Caco-2 (cell line): ENCODE measurements at regions of chr13 and their contacts with region 1.

Region 1: DNA sequence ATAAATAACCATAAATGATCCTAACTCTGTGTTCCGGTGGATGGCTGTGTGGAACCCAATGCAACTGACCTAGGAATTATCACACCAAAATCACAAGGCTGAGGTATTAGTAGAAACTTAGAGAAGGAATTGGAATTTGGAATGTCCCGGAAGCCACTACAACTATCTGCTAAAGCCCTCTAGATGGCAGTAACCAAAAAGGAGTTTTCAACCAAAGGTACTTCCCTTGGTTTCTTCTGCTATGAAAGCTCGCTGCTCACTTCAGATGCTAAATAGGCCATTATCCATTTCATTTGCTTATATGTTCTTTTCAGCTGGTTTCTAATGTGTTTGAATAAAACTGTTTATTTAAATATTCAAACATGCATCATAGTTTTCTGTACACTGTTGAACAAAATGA is 1589.1 kb upstream of the SPRY2 start:
- DNase-seq: peak in 1 of 2 experiments; percentile 26
- H3K4me3 ChIP-seq: no peak overlapping the region
- H3K4me3 Mint-ChIP-seq: no peak overlapping the region
- H3K27ac Mint-ChIP-seq: no peak overlapping the region
- H3K4me1 ChIP-seq: no peaks in the 10 kb centered on the region
- H3K4me1 Mint-ChIP-seq: no peaks in the 10 kb centered on the region
- H3K27me3 ChIP-seq: no peaks in the 10 kb centered on the region
- H3K27me3 Mint-ChIP-seq: no peaks in the 10 kb centered on the region
- CTCF ChIP-seq: peak; percentile 39 to 61

Region 2: GRCh38 chr13:81907787-81908372 is 22.1 kb before region 1 on chr13:
- CTCF ChIA-PET with region 1: no interaction called
- POLR2A ChIA-PET with region 1: no interaction called
- intact Hi-C with region 1: no loop called
- DNase-seq: no peak
- H3K4me3 ChIP-seq: no peak overlapping the region
- H3K4me3 Mint-ChIP-seq: no peak overlapping the region
- H3K27ac Mint-ChIP-seq: no peak overlapping the region
- H3K4me1 ChIP-seq: no peaks in the 10 kb centered on the region
- H3K4me1 Mint-ChIP-seq: no peaks in the 10 kb centered on the region
- H3K27me3 ChIP-seq: no peaks in the 10 kb centered on the region
- H3K27me3 Mint-ChIP-seq: no peaks in the 10 kb centered on the region
- CTCF ChIP-seq: no peak

Region 3: DNA sequence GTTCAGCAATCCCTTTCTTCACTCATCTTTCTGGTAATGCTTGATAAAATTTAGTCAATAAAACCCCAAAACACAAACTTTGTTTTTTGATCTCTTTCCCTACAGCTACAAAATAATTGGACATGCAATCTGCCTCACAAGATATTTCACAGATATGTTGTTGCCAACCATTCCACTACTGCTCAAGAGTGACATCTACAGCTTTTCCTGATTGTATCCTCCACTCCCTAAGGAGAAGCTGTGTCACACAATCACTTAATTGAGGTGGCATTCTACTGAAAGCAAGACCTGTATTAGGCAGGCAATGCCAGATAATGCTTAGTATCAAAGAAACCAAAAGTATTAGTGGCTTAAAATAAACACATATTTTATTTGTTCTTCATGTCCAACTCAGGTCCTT is 57.2 kb after region 1 on chr13:
- CTCF ChIA-PET with region 1: interaction called, 3 read pairs
- POLR2A ChIA-PET with region 1: no interaction called
- intact Hi-C with region 1: loop called (anchors 1 kb)
- DNase-seq: peak in 1 of 2 experiments; percentile 15
- H3K4me3 ChIP-seq: no peak overlapping the region
- H3K4me3 Mint-ChIP-seq: no peak overlapping the region
- H3K27ac Mint-ChIP-seq: no peak overlapping the region
- H3K4me1 ChIP-seq: no peaks in the 10 kb centered on the region
- H3K4me1 Mint-ChIP-seq: no peaks in the 10 kb centered on the region
- H3K27me3 ChIP-seq: no peaks in the 10 kb centered on the region
- H3K27me3 Mint-ChIP-seq: no peaks in the 10 kb centered on the region
- CTCF ChIP-seq: peak in 1 of 2 experiments; percentile 29

Region 4: DNA sequence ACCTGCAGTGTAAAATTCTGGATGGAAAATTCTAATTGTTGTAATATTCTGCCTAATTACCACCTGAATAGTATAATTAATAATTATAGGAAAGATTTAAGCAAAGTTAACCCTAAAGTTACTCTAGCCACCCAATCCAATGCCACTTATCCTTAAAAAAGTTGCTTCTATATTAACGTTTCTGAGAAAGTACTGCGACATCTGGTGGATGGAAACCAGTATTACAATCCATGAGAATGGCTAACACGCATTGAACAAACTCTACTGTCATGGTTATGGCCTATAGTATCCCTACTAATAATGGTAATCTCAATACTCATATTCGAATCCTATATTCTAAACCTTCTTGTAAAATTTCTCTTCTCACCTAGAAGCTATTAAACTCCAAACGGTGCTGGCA is 400.5 kb after region 1 on chr13:
- CTCF ChIA-PET with region 1: no interaction called
- POLR2A ChIA-PET with region 1: no interaction called
- intact Hi-C with region 1: loop called (anchors 1 kb)
- DNase-seq: peak in 1 of 2 experiments; percentile 22
- H3K4me3 ChIP-seq: no peak overlapping the region
- H3K4me3 Mint-ChIP-seq: no peak overlapping the region
- H3K27ac Mint-ChIP-seq: no peak overlapping the region
- H3K4me1 ChIP-seq: no peaks in the 10 kb centered on the region
- H3K4me1 Mint-ChIP-seq: no peaks in the 10 kb centered on the region
- H3K27me3 ChIP-seq: no peaks in the 10 kb centered on the region
- H3K27me3 Mint-ChIP-seq: no peaks in the 10 kb centered on the region
- CTCF ChIP-seq: peak; percentile 53 to 59

Region 5: GRCh38 chr13:82447416-82448077 is 517.6 kb after region 1 on chr13:
- CTCF ChIA-PET with region 1: no interaction called
- POLR2A ChIA-PET with region 1: no interaction called
- intact Hi-C with region 1: no loop called
- DNase-seq: no peak
- H3K4me3 ChIP-seq: no peak overlapping the region
- H3K4me3 Mint-ChIP-seq: no peak overlapping the region
- H3K27ac Mint-ChIP-seq: no peak overlapping the region
- H3K4me1 ChIP-seq: no peaks in the 10 kb centered on the region
- H3K4me1 Mint-ChIP-seq: no peaks in the 10 kb centered on the region
- H3K27me3 ChIP-seq: no peaks in the 10 kb centered on the region
- H3K27me3 Mint-ChIP-seq: no peaks in the 10 kb centered on the region
- CTCF ChIP-seq: no peak